ENCODE measurements at regions of chr18 and their contacts with region 1.

Region 1: GRCh38 chr18:74147779-74148542 is at the starts of genes FBXO15 and TIMM21:
- DNase-seq: peak; percentile 90
- H3K4me3 ChIP-seq: peak within 1 kb of the TSS; percentile 85
- H3K27me3 ChIP-seq: no peaks in the 10 kb centered on the region
- CTCF ChIP-seq: no peak
- polyA plus RNA-seq, gene FBXO15: 0.75 and 0.82 TPM in 2 replicates
- polyA plus RNA-seq, gene TIMM21: 21.2 and 49.4 TPM in 2 replicates

Region 2: DNA sequence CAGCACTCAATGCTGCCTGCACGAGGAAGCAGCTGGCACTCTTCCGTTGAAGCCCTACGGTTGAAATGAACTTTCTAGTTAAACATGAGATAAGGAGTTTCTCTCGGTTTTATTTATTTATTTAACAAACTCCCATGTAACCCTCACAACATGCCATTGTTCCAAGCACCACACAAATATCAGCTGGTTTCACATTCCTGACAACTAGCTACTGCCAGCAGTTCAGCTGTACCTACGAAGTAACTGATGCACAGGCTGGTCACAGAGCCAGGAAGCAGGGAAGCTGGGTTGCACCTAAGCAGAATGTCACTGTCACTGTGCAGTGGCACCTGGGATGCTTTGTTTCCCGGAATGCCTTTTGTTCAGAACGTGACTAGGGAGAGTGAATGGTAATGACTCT is 18.4 kb after region 1 on chr18:
- CTCF ChIA-PET with region 1: no interaction called
- POLR2A ChIA-PET with region 1: interaction called, 14 read pairs
- DNase-seq: no peak
- H3K4me3 ChIP-seq: no peak overlapping the region
- H3K27me3 ChIP-seq: peaks cover under 1% of the 10 kb centered on the region; the same call in 1 of the 2 replicates
- CTCF ChIP-seq: no peak

Measured in BJ (cell line).